ENCODE measurements at regions of chr15 and their contacts with region 1.

Region 1: DNA sequence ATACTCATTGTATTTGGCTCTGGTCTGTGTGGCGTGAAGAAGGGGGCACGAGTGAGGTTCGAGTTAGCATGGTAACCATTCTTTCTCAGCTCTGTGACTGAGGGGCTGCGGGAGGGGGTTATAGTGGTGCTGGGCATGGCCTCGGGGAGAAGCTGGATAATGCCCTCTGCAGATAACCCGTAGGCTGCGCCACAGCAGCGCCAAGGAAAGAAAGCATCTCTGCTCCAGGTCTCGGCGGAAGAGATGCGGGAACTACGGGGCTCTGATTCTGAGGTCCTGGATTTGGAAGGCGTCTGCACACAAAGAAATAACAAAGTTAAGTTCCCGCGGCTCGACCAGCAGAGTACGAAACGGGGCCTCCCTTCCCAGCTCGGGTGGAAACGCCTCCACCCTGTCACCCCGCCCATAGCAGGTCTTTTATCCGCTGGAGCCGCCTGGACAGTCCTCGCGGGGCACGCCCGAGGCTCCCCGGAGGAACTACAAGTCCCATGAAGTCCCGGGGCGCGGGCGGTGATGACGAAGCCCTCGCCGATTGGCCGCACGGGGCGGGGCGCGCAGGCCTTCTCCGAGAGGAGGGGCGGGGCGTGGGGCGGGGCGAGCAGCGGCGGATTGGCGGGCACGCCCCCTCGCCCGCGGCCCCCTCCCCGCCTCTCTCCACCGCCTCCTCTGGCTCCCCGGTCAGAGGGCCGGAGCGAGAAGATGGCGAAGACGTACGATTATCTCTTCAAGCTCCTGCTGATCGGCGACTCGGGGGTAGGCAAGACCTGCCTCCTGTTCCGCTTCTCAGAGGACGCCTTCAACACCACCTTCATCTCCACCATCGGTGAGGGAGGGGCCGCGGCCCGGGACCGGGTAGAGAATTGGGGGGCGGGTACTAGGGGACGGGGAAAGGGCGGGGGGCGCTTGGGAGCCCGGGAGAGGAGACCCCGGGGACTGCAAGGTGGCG is at the start of gene RAB8B:
- DNase-seq: peak; percentile 93
- ATAC-seq: peak; percentile 83
- H3K4me3 Mint-ChIP-seq: peak within 1 kb of the TSS; percentile 96
- H3K27ac Mint-ChIP-seq: peak within 1 kb of the TSS; percentile 95
- H3K4me1 Mint-ChIP-seq: peaks cover 57% of the 10 kb centered on the region
- H3K27me3 Mint-ChIP-seq: no peaks in the 10 kb centered on the region
- CTCF ChIP-seq: no peak
- total RNA-seq, gene RAB8B: 93.1 and 94.4 TPM in 2 replicates

Region 2: DNA sequence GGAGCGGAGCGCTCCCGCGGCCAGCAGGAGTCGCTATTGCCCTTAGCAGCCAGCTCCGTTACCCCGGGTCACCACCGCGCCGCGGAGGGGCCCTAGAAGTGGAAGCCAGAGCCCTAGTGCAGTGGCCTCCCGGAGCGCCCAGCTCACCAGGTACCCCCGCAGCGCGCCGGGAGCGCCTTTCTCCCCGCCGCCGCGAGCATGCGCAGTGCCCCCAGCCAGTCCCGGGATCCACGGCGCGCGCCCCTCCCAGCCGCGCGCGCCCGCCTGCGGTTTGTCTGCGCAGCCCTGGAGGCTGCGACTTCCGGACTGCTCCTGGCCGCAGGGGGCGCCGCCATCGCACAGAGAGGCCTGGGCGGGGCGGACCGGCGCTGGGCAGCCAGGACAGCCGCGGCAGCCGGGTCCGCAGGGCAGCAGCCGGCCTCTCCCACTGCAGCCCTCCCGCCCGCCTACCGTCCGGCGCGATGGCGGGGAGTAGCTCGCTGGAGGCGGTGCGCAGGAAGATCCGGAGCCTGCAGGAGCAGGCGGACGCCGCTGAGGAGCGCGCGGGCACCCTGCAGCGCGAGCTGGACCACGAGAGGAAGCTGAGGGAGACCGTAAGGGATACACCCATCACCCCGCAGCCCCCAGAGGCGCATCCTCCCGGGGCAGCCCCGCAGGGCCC is 141.0 kb before region 1 on chr15:
- CTCF ChIA-PET with region 1: interaction called, 4 read pairs
- POLR2A ChIA-PET with region 1: no interaction called
- intact Hi-C with region 1: loop called (anchors 2 kb)
- DNase-seq: peak; percentile 84
- ATAC-seq: peak; percentile 86
- H3K4me3 Mint-ChIP-seq: peak overlapping the region; percentile 92
- H3K27ac Mint-ChIP-seq: peak overlapping the region; percentile 53
- H3K4me1 Mint-ChIP-seq: peaks cover 22% of the 10 kb centered on the region
- H3K27me3 Mint-ChIP-seq: peaks cover 28% of the 10 kb centered on the region
- CTCF ChIP-seq: peak; percentile 73

Region 3: DNA sequence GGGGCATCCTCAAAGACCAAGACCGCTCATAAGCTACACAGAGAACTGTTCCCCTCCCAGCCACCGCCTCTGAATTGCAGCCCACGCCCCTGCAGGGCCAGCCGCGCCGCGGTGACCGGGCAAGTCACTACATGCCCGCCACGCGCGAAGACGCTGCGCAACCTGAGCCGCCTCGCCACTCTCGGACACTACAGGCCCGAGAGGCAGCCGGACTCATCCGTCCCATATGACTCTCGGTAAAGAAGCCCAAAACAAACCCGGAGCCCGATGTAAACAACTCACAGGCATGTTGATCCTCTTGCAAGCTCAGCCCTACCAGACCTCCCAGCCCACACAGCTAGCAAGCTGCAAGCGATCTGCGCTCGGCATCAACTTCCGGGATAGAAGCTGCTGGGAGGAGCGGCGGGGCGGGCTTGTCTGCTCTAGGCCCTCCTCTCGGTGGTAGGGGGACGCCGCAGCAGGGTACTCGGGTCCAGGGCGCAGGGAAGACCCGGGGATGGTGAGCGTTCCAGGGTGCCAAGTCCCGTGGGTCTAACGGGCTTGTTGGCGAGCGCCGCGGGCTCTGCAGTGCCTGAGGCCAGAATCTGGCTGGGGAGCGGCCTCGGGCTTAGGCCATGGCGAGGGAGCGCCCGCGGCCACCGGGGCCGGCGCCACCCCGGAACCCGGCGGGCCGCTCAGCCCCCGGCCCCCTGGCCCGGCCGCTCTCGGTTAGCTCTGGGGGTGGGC is 31.9 kb before region 1 on chr15 and contains the start of gene RPS27L:
- CTCF ChIA-PET with region 1: interaction called, 3 read pairs
- POLR2A ChIA-PET with region 1: interaction called, 32 read pairs
- intact Hi-C with region 1: loop called (anchors 1 kb)
- DNase-seq: peak; percentile 81
- ATAC-seq: peak; percentile 95
- H3K4me3 Mint-ChIP-seq: peak within 1 kb of the TSS; percentile 98
- H3K27ac Mint-ChIP-seq: peak within 1 kb of the TSS; percentile 97
- H3K4me1 Mint-ChIP-seq: peaks cover 27% of the 10 kb centered on the region
- H3K27me3 Mint-ChIP-seq: no peaks in the 10 kb centered on the region
- CTCF ChIP-seq: no peak
- total RNA-seq, gene RPS27L: 70.8 and 74.9 TPM in 2 replicates

Region 4: DNA sequence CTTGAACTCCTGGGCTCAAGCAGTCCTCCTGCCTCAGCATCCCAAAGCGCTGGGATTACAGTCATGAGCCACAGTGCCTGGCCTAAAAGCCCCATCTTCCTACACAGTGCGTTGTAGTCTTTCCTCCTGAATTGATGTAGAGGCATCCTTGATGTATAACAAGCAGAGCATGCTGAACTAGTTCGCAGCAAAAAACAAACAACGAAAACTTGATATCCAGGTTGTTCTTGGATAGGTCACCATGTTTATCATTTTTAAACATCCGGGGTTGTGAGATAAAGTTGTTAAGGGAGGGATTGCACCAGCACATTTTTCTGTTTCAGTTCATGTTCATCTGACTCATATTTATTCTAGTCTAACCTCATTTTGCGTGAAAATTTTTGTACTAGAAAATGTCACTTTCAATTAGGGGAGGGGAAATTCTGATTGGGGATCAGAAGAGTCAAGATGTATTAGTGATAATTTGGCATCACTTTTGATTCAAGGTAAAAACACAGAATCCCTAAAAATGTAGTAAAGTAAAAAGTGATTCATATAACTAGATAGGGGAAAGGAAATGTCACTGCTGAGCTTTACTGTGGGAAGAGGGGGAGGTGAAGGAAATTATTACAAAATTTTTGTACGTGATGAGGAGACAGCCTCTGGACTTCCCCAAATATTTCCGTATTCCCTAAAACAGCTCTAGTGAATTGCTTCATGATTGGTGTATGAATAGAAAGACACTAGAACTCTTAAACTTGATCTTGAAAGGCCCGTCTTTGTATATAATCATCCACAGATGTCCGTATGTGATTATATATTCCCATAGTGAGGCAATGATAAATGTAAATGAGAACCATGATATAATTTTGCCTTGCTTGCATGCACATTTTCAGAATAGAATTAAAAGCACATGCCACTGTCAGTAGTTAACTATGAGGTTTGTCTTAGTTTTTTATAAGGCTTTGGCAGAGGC is 23.1 kb after region 1 on chr15:
- CTCF ChIA-PET with region 1: no interaction called
- POLR2A ChIA-PET with region 1: interaction called, 17 read pairs
- intact Hi-C with region 1: loop called (anchors 1 kb)
- DNase-seq: no peak
- ATAC-seq: peak; percentile 59
- H3K4me3 Mint-ChIP-seq: peak overlapping the region; percentile 76
- H3K27ac Mint-ChIP-seq: peak overlapping the region; percentile 94
- H3K4me1 Mint-ChIP-seq: peaks cover 77% of the 10 kb centered on the region
- H3K27me3 Mint-ChIP-seq: no peaks in the 10 kb centered on the region
- CTCF ChIP-seq: no peak

Region 5: GRCh38 chr15:63234451-63234870 is 45.3 kb after region 1 on chr15:
- CTCF ChIA-PET with region 1: interaction called, 4 read pairs
- POLR2A ChIA-PET with region 1: interaction called, 13 read pairs
- intact Hi-C with region 1: loop called (anchors 5 kb)
- DNase-seq: no peak
- ATAC-seq: no peak
- H3K4me3 Mint-ChIP-seq: peak overlapping the region; percentile 56
- H3K27ac Mint-ChIP-seq: peak overlapping the region; percentile 59
- H3K4me1 Mint-ChIP-seq: peaks cover 68% of the 10 kb centered on the region
- H3K27me3 Mint-ChIP-seq: no peaks in the 10 kb centered on the region
- CTCF ChIP-seq: no peak

Region 6: GRCh38 chr15:63473999-63474809 is 285.0 kb after region 1 on chr15:
- CTCF ChIA-PET with region 1: no interaction called
- POLR2A ChIA-PET with region 1: interaction called, 4 read pairs
- intact Hi-C with region 1: loop called (anchors 2 kb)
- DNase-seq: peak; percentile 59
- ATAC-seq: peak; percentile 64
- H3K4me3 Mint-ChIP-seq: peak overlapping the region; percentile 83
- H3K27ac Mint-ChIP-seq: peak overlapping the region; percentile 99
- H3K4me1 Mint-ChIP-seq: peaks cover 75% of the 10 kb centered on the region
- H3K27me3 Mint-ChIP-seq: no peaks in the 10 kb centered on the region
- CTCF ChIP-seq: no peak